ENCODE measurements at regions of chr1 and their contacts with region 1.

Region 1: GRCh38 chr1:17236779-17237560 is 11.9 kb upstream of the PADI3 start:
- DNase-seq: peak; percentile 74

Region 2: DNA sequence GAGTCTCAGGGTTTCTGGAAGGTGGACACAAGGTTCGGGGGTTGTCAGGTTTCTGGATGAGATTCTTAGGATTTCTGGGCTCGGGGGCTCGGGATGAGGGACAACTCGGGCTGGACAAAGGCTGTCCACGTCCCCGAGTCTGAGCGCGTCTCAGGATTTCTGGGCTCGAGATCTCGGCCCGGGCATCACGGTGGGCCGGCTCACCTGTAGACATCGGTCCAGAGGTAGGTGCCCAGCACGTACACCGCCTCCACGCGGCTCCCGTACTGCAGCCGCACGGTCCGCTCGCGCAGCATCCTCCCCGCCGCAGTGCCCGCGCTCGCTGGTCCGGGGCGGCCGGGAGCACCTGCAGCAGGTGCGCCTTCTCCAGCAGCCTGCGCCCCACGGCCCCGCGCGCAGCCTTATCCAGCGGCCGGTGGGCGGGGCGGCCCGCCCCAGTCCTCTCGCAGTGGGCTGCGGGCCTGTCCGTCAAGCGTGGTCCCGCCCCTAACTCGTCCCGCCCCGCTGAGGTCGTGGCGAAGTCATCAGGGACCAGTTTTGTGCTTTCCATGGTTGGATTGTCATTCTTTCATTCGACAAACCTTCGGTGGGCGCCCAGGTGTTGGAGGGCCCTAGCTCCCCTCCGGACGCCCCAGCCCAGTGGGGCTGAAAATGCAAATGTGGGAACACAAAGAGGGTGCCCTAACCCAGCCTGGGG is 117.7 kb before region 1 on chr1 and contains the start of gene PADI2:
- in situ Hi-C with region 1: loop called (anchors 10 kb)
- DNase-seq: no peak

Measured in KBM-7 (cell line).